CD14-positive monocyte (primary cell): ENCODE measurements at regions of chr4 and their contacts with region 1.

Region 1: DNA sequence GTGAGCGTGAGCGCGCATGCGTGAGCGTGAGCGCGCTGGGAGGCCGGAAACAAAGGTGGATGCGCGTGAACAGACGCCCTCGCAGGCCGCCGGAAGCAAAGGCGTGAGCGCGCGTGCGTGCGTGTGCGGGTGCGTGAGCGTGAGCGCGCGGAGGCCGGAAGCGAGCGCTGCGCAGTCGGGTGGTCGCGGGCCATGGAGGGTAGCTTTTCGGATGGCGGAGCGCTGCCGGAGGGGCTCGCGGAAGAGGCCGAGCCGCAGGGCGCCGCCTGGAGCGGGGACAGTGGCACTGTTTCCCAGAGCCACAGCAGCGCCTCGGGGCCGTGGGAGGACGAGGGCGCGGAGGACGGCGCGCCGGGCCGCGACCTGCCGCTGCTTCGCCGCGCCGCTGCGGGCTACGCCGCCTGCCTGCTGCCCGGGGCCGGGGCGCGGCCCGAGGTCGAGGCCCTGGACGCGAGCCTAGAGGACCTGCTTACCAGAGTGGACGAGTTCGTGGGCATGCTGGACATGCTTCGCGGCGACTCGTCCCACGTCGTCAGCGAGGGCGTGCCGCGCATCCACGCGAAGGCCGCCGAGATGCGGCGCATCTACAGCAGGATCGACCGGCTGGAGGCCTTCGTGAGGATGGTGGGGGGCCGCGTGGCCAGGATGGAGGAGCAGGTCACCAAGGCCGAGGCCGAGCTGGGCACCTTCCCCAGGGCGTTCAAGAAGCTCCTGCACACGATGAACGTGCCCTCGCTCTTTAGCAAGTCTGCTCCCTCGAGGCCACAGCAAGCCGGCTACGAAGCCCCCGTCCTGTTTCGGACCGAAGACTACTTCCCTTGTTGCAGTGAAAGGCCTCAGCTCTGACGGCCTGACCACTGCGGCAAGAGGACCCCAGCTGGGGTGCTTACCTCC is at the start of gene BLOC1S4:
- DNase-seq: peak; percentile 77 to 90 (median 87)
- H3K4me3 ChIP-seq: peak within 1 kb of the TSS; percentile 69 to 81 (median 76)
- H3K4me3 Mint-ChIP-seq: peak within 1 kb of the TSS; percentile 91 to 96
- H3K27ac ChIP-seq: peak within 1 kb of the TSS; percentile 70 to 87
- H3K27ac Mint-ChIP-seq: peak within 1 kb of the TSS; percentile 85 to 94 (median 89)
- H3K4me1 ChIP-seq: peaks cover 23 to 37% of the 10 kb centered on the region in 2 donors
- H3K4me1 Mint-ChIP-seq: peaks cover 26% of the 10 kb centered on the region
- H3K27me3 ChIP-seq: no peaks in the 10 kb centered on the region
- H3K27me3 Mint-ChIP-seq: peaks cover 2 to 8% (median 3%) of the 10 kb centered on the region in 3 donors
- CTCF ChIP-seq: peak; percentile 32
- polyA plus RNA-seq, gene BLOC1S4: 6.7 to 30.9 (median 20.1) TPM

Region 2: DNA sequence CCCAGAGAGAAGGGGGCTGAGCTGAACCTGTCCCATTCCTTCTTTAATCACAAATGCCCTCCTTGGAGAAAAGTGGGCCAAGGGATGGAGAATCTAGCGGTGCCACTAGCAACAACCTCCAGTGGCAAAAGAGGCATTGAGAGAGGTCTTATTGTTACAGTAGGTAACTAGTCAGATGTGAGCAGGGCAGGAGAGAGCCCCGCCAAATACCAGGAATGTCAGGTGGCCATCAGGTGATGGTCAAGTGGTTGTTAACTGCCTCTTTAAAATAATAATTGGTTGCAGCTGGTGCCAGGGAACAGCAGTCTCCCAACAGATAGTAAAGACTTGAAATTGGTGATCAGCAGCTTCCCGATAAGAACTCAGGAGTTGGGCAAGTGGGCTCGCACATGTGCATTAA is 1124.0 kb before region 1 on chr4:
- intact Hi-C with region 1: no loop called
- DNase-seq: no peak
- H3K4me3 ChIP-seq: no peak overlapping the region
- H3K4me3 Mint-ChIP-seq: no peak overlapping the region
- H3K27ac ChIP-seq: no peak overlapping the region
- H3K27ac Mint-ChIP-seq: no peak overlapping the region
- H3K4me1 ChIP-seq: no peaks in the 10 kb centered on the region
- H3K4me1 Mint-ChIP-seq: no peaks in the 10 kb centered on the region
- H3K27me3 ChIP-seq: no peaks in the 10 kb centered on the region
- H3K27me3 Mint-ChIP-seq: peaks cover 0 to 3% (median 2%) of the 10 kb centered on the region in 3 donors
- CTCF ChIP-seq: no peak

Region 3: DNA sequence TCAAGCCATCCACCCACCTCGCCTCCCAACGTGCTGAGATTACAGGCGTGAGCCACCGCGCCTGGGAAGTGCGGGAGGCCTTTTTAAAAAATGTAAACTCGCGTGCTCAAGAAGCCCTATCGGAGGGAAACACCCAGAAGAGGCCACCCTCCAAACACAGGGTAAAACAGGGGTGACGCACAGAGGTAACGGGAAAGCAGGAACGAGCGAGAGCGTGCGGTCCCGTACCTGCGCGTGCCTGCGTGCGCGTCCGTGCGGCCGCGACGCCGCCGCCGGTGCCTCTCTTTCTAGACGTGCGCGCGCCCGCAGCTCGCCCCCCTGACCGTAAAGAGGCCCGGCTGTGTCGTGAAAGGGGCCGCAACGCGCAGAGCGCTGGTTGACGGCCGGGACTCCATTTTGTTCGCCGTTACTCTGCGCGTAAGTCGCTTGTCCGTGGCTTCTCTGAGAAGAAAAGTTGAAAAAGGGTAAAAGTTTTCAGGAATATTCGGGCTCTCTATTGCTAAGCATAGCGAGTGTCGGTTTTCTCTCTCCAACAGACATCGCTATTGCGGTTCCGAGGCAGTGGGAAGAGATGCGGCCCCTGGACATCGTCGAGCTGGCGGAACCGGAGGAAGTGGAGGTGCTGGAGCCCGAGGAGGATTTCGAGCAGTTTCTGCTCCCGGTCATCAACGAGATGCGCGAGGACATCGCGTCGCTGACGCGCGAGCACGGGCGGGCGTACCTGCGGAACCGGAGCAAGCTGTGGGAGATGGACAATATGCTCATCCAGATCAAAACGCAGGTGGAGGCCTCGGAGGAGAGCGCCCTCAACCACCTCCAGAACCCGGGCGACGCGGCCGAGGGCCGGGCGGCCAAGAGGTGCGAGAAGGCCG is 75.7 kb before region 1 on chr4 and contains the start of gene MRFAP1:
- intact Hi-C with region 1: loop called (anchors 2 to 5 kb)
- DNase-seq: peak; percentile 90 to 94 (median 92)
- H3K4me3 ChIP-seq: peak within 1 kb of the TSS; percentile 89 to 97 (median 89)
- H3K4me3 Mint-ChIP-seq: peak within 1 kb of the TSS; percentile 99 to 100
- H3K27ac ChIP-seq: peak within 1 kb of the TSS; percentile 96 to 99
- H3K27ac Mint-ChIP-seq: peak within 1 kb of the TSS; percentile 96 to 100 (median 99)
- H3K4me1 ChIP-seq: peaks cover 20 to 29% of the 10 kb centered on the region in 2 donors
- H3K4me1 Mint-ChIP-seq: peaks cover 24% of the 10 kb centered on the region
- H3K27me3 ChIP-seq: no peaks in the 10 kb centered on the region
- H3K27me3 Mint-ChIP-seq: peaks cover 0 to 2% (median 0%) of the 10 kb centered on the region in 3 donors
- CTCF ChIP-seq: no peak
- polyA plus RNA-seq, gene MRFAP1: 72.1 to 180 (median 171) TPM

Region 4: GRCh38 chr4:6658597-6659075 is 57.6 kb before region 1 on chr4:
- intact Hi-C with region 1: no loop called
- DNase-seq: peak in 1 of 3 donors; percentile 17
- H3K4me3 ChIP-seq: peak overlapping the region in 1 of 3 experiments; percentile 52
- H3K4me3 Mint-ChIP-seq: peak overlapping the region; percentile 57 to 79
- H3K27ac ChIP-seq: no peak overlapping the region
- H3K27ac Mint-ChIP-seq: no peak overlapping the region
- H3K4me1 ChIP-seq: peaks cover 5 to 11% of the 10 kb centered on the region in 2 donors
- H3K4me1 Mint-ChIP-seq: peaks cover 11% of the 10 kb centered on the region
- H3K27me3 ChIP-seq: peaks cover 35 to 66% of the 10 kb centered on the region in 2 donors
- H3K27me3 Mint-ChIP-seq: peaks cover 2 to 62% (median 57%) of the 10 kb centered on the region in 3 donors
- CTCF ChIP-seq: no peak

Region 5: DNA sequence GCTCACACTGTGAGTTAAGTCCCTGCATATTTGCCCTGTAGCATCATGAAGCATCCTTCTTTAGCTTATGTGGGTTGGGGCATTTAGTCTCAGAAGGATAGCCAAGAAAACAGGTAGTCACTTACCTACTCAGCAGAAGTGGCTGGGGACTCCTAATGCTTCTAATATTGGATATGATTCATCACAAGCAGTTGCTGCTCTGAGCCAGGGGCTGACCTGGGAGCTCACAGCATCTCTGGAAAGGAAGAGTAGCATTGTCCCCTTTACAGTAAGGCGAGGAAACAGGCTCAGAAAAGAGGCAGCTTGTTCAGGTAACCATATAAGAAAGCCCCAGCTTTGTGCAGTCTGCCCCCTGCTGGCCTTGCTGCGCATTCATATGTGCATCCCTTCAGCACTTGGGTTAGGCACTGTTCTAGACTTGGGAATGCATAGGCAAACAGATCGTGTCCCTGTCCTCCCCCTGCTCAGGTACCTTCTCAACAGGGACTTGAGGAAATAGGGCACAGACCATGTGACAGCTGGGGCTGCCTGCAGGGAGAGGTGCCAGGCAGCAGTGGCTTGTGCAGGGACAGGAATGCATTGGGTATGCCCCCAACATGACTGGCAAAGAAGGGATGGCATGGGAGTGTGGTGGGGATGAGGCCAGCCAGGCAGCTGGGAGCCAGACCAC is 157.7 kb after region 1 on chr4:
- intact Hi-C with region 1: loop called (anchors 5 kb)
- DNase-seq: peak in 2 of 3 donors; percentile 57 to 61
- H3K4me3 ChIP-seq: no peak overlapping the region
- H3K4me3 Mint-ChIP-seq: no peak overlapping the region
- H3K27ac ChIP-seq: peak overlapping the region in 1 of 2 donors; percentile 2
- H3K27ac Mint-ChIP-seq: peak overlapping the region in 3 of 7 donors; percentile 15 to 82 (median 36)
- H3K4me1 ChIP-seq: peaks cover 45 to 56% of the 10 kb centered on the region in 2 donors
- H3K4me1 Mint-ChIP-seq: peaks cover 53% of the 10 kb centered on the region
- H3K27me3 ChIP-seq: no peaks in the 10 kb centered on the region
- H3K27me3 Mint-ChIP-seq: no peaks in the 10 kb centered on the region
- CTCF ChIP-seq: peak; percentile 83

Region 6: DNA sequence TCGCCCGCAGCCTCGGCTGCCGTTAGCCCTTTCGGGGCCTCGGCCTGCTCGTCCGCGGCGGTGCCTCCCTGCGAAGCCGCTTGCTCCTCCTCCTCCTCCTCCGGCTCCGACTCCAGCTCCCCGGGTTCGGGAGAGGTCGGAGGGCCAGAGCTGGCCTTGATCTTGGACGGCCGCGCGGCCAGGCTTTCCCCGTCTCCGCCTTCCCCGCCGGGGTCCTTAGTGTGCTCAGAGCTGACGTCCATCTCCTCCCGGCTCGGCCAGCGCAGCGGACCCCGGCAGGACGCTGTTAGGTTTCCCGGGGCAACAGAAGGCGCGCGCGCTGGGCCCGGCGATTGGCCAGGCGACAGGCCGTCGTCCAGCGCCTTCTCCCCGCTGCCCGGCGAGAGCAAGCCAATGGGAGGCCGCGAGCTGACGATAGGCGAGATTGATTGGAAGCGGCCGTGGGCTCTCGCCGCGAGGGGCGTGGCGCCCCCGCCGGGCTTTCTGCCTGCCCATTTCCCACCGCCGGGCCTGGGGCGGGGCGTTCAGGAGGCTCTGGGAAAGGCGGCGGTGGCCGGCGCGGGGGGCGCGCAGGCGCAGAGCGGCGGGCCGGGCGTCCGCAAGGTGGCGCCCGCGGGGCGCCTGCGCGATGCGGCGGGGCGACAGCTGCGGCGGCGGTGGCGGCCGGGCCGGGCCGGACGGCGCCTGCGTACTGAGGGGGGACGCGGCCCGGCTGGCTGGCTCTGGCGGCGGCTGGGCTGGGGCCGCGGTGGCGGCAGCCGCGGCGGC is 326.6 kb after region 1 on chr4 and contains the start of gene TADA2B:
- intact Hi-C with region 1: loop called in 1 of 2 experiments (anchors 10 kb)
- DNase-seq: peak; percentile 97 to 98 (median 97)
- H3K4me3 ChIP-seq: peak within 1 kb of the TSS; percentile 84 to 92 (median 87)
- H3K4me3 Mint-ChIP-seq: peak within 1 kb of the TSS; percentile 89 to 97
- H3K27ac ChIP-seq: peak within 1 kb of the TSS; percentile 76 to 88
- H3K27ac Mint-ChIP-seq: peak within 1 kb of the TSS; percentile 81 to 95 (median 90)
- H3K4me1 ChIP-seq: peaks cover 39 to 52% of the 10 kb centered on the region in 2 donors
- H3K4me1 Mint-ChIP-seq: peaks cover 59% of the 10 kb centered on the region
- H3K27me3 ChIP-seq: no peaks in the 10 kb centered on the region
- H3K27me3 Mint-ChIP-seq: peaks cover 0 to 10% (median 3%) of the 10 kb centered on the region in 3 donors
- CTCF ChIP-seq: peak; percentile 21
- polyA plus RNA-seq, gene TADA2B: 2.0 to 10.2 (median 2.6) TPM

Region 7: DNA sequence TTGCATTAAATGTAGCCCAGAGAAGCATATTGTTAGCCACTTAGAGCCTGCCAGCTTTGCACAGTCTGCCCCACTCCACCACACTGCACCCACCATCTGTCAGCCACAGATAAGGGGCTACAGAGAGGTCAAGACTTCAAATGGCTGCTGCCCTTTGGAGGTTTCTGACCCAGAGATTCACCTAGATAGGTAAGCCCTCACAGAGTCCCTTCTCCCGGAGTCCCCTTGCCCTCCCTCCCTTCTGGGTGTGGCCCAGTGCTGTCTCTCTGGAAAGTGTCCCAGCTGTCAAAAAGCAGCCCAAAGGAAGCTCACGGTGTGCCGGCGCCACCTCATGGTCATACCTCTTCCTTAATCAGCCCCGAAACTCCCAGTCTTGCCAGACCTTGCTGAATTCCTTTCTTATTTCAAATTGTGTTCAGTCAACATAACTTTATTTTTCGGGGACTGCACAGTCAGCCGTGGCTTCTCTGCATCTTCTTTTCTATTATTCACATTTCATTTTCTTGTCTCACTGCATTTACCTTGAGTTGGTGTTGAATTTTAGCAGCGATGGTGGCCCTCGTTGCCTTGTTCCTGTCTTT is 365.7 kb after region 1 on chr4:
- intact Hi-C with region 1: loop called in 1 of 2 experiments (anchors 5 kb)
- DNase-seq: peak in 2 of 3 donors; percentile 33 to 47
- H3K4me3 ChIP-seq: no peak overlapping the region
- H3K4me3 Mint-ChIP-seq: peak overlapping the region in 1 of 2 donors; percentile 39
- H3K27ac ChIP-seq: no peak overlapping the region
- H3K27ac Mint-ChIP-seq: no peak overlapping the region
- H3K4me1 ChIP-seq: no peaks in the 10 kb centered on the region
- H3K4me1 Mint-ChIP-seq: peaks cover 9% of the 10 kb centered on the region
- H3K27me3 ChIP-seq: peaks cover 3 to 41% of the 10 kb centered on the region in 2 donors
- H3K27me3 Mint-ChIP-seq: peaks cover 46 to 69% (median 53%) of the 10 kb centered on the region in 3 donors
- CTCF ChIP-seq: peak; percentile 49